CD4-positive, alpha-beta T cell (primary cell): ENCODE measurements at regions of chr11 and their contacts with region 1.

Region 1: GRCh38 chr11:69296890-69297786 is 3.2 kb downstream of the MYEOV start:
- DNase-seq: peak; percentile 48 to 92 (median 72)
- ATAC-seq: peak; percentile 62
- H3K4me3 ChIP-seq: peak overlapping the region; percentile 41
- H3K4me3 Mint-ChIP-seq: peak overlapping the region; percentile 86
- H3K27ac ChIP-seq: peak overlapping the region; percentile 15 to 17
- H3K27ac Mint-ChIP-seq: peak overlapping the region; percentile 60
- H3K4me1 ChIP-seq: peaks cover 78% of the 10 kb centered on the region
- H3K4me1 Mint-ChIP-seq: peaks cover 66% of the 10 kb centered on the region
- H3K27me3 ChIP-seq: no peaks in the 10 kb centered on the region
- H3K27me3 Mint-ChIP-seq: no peaks in the 10 kb centered on the region
- CTCF ChIP-seq: no peak

Region 2: DNA sequence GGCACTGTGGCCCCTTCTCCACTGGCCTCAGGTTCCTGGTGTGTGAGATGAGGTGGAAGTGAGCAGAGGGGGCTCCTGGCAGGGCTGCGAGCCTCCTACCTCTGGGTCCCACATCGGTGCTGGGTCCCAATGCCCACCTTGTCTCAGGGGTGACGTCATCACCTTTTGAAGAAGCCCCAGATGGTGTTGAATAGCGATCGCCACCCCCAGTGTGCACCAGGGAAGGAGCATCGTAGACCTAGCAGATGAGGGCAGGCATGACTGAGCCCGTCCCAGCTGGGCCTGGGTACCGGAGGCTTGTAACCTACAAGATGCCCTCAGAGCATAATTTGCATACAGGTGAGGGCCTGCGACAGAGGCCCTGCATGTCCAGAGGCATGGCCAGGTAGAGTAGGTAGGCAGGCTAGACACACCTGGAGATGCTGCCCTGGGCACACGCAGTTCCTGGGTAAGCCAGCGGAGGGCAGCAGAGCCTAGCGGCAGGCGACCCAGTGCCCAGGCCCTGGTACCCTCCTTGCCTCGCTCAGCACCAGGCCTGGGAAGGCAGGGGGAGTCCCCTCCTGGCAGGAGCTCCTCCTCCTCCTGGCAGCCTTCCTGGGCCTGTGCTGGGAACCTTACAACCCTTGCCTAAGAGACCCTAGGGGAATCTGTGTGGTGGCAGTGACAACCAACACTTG is 195.9 kb before region 1 on chr11:
- CTCF ChIA-PET with region 1: no interaction called
- POLR2A ChIA-PET with region 1: no interaction called
- intact Hi-C with region 1: loop called (anchors 2 to 10 kb)
- DNase-seq: peak; percentile 56 to 88 (median 72)
- ATAC-seq: peak; percentile 99
- H3K4me3 ChIP-seq: no peak overlapping the region
- H3K4me3 Mint-ChIP-seq: no peak overlapping the region
- H3K27ac ChIP-seq: no peak overlapping the region
- H3K27ac Mint-ChIP-seq: no peak overlapping the region
- H3K4me1 ChIP-seq: peaks cover 7% of the 10 kb centered on the region
- H3K4me1 Mint-ChIP-seq: peaks cover 4% of the 10 kb centered on the region
- H3K27me3 ChIP-seq: peaks cover 0 to 6% of the 10 kb centered on the region in 2 experiments
- H3K27me3 Mint-ChIP-seq: no peaks in the 10 kb centered on the region
- CTCF ChIP-seq: peak; percentile 95

Region 3: GRCh38 chr11:69311767-69312385 is 14.7 kb after region 1 on chr11:
- CTCF ChIA-PET with region 1: no interaction called
- POLR2A ChIA-PET with region 1: interaction called, 19 read pairs
- intact Hi-C with region 1: no loop called
- DNase-seq: peak in 5 of 14 experiments; percentile 20 to 55 (median 52)
- ATAC-seq: peak; percentile 69
- H3K4me3 ChIP-seq: peak overlapping the region; percentile 11
- H3K4me3 Mint-ChIP-seq: peak overlapping the region; percentile 63
- H3K27ac ChIP-seq: peak overlapping the region in 1 of 2 donors; percentile 52
- H3K27ac Mint-ChIP-seq: peak overlapping the region; percentile 77
- H3K4me1 ChIP-seq: peaks cover 34% of the 10 kb centered on the region
- H3K4me1 Mint-ChIP-seq: peaks cover 47% of the 10 kb centered on the region
- H3K27me3 ChIP-seq: no peaks in the 10 kb centered on the region
- H3K27me3 Mint-ChIP-seq: no peaks in the 10 kb centered on the region
- CTCF ChIP-seq: no peak

Region 4: GRCh38 chr11:69443138-69443967 is 146.2 kb after region 1 on chr11:
- CTCF ChIA-PET with region 1: no interaction called
- POLR2A ChIA-PET with region 1: no interaction called
- intact Hi-C with region 1: loop called in 1 of 2 experiments (anchors 2 kb)
- DNase-seq: peak; percentile 31 to 79 (median 58)
- ATAC-seq: peak; percentile 84
- H3K4me3 ChIP-seq: peak overlapping the region; percentile 39
- H3K4me3 Mint-ChIP-seq: peak overlapping the region; percentile 38
- H3K27ac ChIP-seq: no peak overlapping the region
- H3K27ac Mint-ChIP-seq: no peak overlapping the region
- H3K4me1 ChIP-seq: peaks cover 19% of the 10 kb centered on the region
- H3K4me1 Mint-ChIP-seq: peaks cover 12% of the 10 kb centered on the region
- H3K27me3 ChIP-seq: peaks cover 0 to 9% of the 10 kb centered on the region in 2 experiments
- H3K27me3 Mint-ChIP-seq: peaks cover 15% of the 10 kb centered on the region
- CTCF ChIP-seq: no peak

Region 5: GRCh38 chr11:69642913-69643632 is 345.9 kb after region 1 on chr11:
- CTCF ChIA-PET with region 1: interaction called, 10 read pairs
- POLR2A ChIA-PET with region 1: interaction called, 21 read pairs
- intact Hi-C with region 1: loop called (anchors 1 kb)
- DNase-seq: peak; percentile 55 to 90 (median 74)
- ATAC-seq: peak; percentile 77
- H3K4me3 ChIP-seq: peak overlapping the region; percentile 64
- H3K4me3 Mint-ChIP-seq: peak overlapping the region; percentile 85
- H3K27ac ChIP-seq: no peak overlapping the region
- H3K27ac Mint-ChIP-seq: no peak overlapping the region
- H3K4me1 ChIP-seq: peaks cover 44% of the 10 kb centered on the region
- H3K4me1 Mint-ChIP-seq: peaks cover 31% of the 10 kb centered on the region
- H3K27me3 ChIP-seq: peaks cover 31 to 34% of the 10 kb centered on the region in 2 experiments
- H3K27me3 Mint-ChIP-seq: peaks cover 34% of the 10 kb centered on the region
- CTCF ChIP-seq: peak; percentile 92

Region 6: DNA sequence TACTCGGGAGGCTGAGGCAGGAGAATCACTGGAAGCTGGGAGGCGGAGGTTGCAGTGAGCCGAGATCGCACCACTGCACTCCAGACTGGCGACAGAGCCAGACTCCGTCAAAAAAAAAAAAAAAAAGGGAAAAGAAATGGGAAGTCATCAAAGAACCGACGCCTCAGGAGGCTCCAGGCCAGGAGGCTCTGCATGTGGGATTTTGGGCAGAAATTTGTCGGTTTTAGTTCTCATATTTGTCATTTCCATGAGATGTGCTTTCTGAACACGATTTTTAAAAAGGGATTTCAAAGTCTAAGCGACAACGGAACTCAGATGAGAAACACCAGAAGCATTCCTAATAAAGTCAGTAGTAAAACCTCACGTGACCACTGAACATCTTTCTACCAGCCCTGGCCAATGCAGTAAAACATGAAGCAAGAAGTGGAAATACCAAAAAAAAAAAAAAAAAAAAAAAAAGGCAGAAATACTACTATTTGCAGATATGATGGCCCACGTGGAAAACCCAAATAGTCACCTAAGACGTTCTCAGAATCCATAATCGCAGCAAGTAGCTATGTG is 378.8 kb after region 1 on chr11:
- CTCF ChIA-PET with region 1: no interaction called
- POLR2A ChIA-PET with region 1: no interaction called
- intact Hi-C with region 1: loop called in 1 of 2 experiments (anchors 1 kb)
- DNase-seq: no peak
- ATAC-seq: no peak
- H3K4me3 ChIP-seq: peak overlapping the region; percentile 65
- H3K4me3 Mint-ChIP-seq: peak overlapping the region; percentile 97
- H3K27ac ChIP-seq: no peak overlapping the region
- H3K27ac Mint-ChIP-seq: no peak overlapping the region
- H3K4me1 ChIP-seq: peaks cover 30% of the 10 kb centered on the region
- H3K4me1 Mint-ChIP-seq: peaks cover 31% of the 10 kb centered on the region
- H3K27me3 ChIP-seq: no peaks in the 10 kb centered on the region
- H3K27me3 Mint-ChIP-seq: no peaks in the 10 kb centered on the region
- CTCF ChIP-seq: no peak